ENCODE measurements at regions of chr22 and their contacts with region 1.

Region 1: DNA sequence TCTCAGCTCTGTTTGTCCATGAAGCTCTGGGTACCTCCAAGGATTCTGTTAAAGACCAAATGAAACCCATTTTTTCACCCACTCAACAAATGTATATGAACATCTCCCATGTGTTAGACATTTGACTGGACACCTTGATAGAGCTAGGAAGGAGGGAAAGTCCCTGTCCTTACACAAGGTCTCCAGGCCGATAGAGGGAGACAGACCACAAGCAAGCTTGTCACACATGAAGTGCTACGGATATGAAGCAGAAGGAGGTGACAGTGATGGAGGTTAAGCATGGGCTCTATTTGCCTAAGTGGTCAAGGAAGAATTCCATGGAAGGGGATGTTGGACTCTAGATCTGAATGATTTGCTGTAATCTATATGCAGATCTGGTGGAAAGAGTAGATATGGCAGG is 138.5 kb downstream of the MYO18B start:
- DNase-seq: peak; percentile 21
- ATAC-seq: peak; percentile 56; the same call in 2 of the 3 replicates
- H3K4me3 ChIP-seq: no peak overlapping the region
- H3K27ac ChIP-seq: no peak overlapping the region
- H3K4me1 ChIP-seq: peaks cover 10% of the 10 kb centered on the region
- H3K27me3 ChIP-seq: peaks cover 0 to 3% of the 10 kb centered on the region in 2 experiments; a peak in 1 of 5 replicates
- CTCF ChIP-seq: peak; percentile 70
- EP300 ChIP-seq: no peak
- POLR2A ChIP-seq: no peak
- RAD21 ChIP-seq: no peak

Region 2: DNA sequence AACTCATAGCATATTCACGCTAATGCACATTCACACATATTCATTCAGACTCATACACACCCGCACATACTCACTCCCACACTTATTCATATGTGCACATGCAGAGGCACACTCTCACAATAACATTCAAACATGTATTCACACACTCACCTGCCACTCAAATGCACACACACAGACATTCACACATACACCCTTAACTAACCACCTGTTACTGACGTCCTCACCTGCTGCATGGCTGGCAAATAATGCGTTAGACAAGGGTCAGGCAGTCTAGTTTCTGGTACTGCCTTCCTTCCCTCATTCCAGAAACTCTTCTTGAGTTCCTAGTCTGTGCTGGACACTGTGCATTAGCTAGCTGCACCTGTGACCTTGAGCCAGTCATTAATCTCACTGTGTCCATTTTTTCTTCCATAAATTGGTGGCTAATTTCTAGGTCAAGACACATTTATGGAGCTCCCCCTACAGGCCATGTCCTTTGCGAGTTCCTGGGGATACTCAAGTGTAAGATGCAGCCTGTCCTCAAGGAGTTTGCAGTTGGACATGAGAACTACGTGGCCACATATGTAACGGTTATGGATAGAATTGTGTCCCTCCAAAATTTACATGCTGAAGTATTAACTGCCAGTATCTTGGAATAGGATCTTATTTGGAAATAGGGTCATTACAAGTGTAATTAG is 254.3 kb after region 1 on chr22:
- CTCF ChIA-PET with region 1: no interaction called
- POLR2A ChIA-PET with region 1: no interaction called
- in situ Hi-C with region 1: no loop called
- intact Hi-C with region 1: loop called (anchors 10 kb)
- DNase-seq: peak; percentile 3
- ATAC-seq: no peak
- H3K4me3 ChIP-seq: no peak overlapping the region
- H3K27ac ChIP-seq: no peak overlapping the region
- H3K4me1 ChIP-seq: no peaks in the 10 kb centered on the region
- H3K27me3 ChIP-seq: peaks cover 0 to 1% of the 10 kb centered on the region in 2 experiments; a peak in 1 of 5 replicates
- CTCF ChIP-seq: peak; percentile 51
- EP300 ChIP-seq: no peak
- POLR2A ChIP-seq: no peak
- RAD21 ChIP-seq: no peak